Right ventricle myocardium inferior (tissue), 1 donor: ENCODE measurements at regions of chr1 and their contacts with region 1.

Region 1: DNA sequence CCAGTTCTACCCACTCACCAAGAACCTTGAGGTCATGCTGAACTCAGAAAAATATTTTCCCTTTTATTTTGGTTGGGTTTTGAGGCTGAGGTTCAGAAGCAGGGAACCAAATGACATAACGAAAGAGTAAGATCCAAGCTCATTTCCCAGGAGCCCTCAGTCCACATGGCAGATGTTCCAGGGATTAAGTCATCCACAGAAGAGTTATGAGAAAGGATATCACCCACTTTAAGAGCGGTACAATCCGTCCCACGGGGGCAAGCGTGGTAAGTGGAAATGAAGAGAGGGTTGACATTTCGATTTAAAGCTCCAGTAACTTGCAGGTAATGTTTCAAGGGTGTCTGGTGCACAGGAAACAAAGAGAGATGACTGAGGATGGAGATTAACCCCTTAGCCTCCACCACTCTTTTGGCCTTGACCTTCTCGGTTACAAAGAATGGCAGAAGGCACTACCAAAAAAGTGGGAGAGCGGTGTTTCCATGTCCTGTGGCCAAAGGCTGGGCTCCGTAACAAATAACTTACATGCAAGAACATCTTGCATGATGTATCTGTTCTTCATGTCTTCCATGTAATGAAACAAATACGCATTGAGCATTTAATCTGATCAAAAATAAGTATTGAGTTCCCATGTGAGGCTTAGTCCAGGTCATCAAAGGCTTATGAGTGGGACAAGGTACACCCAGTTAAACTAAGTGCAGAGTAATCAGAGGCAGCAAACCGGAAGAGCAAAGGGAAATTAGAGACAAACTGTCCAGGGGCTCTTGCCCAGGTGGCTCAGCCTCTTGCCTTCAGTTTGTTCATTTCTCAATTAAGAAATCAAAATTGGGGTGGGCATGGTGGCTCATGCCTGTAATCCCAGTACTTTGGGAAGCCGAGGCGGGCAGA is 241.4 kb downstream of the TOMM20 start:
- DNase-seq: peak; percentile 82
- ATAC-seq: peak; percentile 76

Region 2: DNA sequence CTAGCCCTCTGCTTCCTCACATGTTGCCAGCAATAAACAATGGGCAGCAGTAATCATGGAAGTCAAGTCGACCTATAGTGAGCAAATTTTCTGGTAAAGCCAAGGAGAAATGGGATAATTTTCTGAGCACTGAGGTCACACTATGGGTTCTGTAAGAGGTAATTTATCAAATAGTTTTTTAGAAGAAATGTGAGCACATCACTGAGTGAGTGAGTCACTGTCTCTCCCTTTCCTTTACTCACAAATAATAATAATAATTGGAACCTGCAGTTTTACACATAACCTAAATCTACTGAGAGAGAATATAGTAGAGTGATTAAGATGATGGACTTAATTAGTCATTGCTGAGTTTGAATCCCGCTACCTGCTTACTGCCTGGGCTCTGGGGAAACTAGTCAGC is 959.1 kb before region 1 on chr1:
- intact Hi-C with region 1: no loop called
- DNase-seq: no peak
- ATAC-seq: no peak

Region 3: GRCh38 chr1:234499119-234499942 is 387.9 kb before region 1 on chr1:
- intact Hi-C with region 1: loop called (anchors 5 kb)
- DNase-seq: peak; percentile 97
- ATAC-seq: peak; percentile 97

Region 4: GRCh38 chr1:234839663-234840062 is 47.6 kb before region 1 on chr1:
- intact Hi-C with region 1: no loop called
- DNase-seq: no peak
- ATAC-seq: no peak

Region 5: GRCh38 chr1:235075188-235075926 is 188.1 kb after region 1 on chr1:
- intact Hi-C with region 1: loop called (anchors 2 kb)
- DNase-seq: peak; percentile 82
- ATAC-seq: peak; percentile 70

Region 6: DNA sequence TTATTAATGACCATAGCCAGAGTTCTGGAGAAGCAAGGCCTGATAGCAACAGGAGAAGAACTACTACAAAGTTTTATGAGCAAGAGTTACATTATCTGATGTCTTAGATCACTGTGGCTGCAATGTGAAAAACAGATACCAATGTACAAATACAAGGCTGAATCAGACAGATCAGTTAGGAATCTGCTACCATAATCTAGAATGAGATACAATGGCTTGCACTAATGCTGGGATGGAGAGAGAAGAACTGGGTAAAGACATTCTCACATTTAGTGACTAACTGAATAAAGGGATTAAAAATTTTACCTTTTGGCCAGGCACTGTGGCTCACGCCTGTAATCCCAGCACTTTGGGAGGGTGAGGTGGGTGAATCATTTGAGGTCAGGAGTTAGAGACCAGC is 399.4 kb after region 1 on chr1:
- intact Hi-C with region 1: no loop called
- DNase-seq: no peak
- ATAC-seq: no peak